SK-N-SH (cell line): ENCODE measurements at regions of chr3 and their contacts with region 1.

Region 1: DNA sequence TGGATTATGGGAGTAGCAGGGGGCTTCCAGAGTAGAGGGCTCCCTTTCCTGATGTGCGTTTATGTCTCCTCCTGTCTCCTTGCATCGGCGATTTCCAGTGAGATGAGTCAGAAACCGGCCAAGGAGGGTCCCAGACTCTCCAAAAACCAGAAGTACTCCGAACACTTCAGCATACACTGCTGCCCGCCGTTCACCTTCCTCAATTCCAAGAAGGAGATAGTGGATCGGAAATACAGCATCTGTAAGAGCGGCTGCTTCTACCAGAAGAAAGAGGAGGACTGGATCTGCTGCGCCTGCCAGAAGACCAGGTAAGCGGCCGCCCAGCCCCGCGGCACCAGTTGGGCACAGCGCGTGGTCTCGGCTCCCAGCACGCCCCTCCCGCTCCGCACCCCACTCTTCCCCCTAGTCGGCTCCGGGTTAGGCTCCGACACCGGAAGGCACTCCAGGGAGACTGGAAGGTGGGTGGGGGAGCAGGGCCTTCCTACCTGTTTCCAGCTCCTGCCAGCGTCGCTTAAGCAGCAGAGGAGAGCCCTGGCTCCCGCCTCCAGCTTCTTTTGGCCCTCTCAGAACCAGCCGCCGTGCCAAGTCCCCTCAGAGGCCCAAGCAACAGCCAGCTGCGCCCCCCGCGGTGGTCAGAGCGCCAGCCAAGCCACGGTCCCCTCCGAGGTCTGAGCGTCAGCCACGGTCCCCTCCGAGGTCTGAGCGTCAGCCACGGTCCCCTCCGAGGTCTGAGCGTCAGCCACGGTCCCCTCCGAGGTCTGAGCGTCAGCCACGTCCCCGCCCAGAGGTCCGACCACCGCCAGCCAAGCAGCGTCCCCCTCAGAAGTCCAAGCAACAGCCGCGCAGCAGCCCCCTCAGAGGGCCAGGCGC is 34.7 kb downstream of the MOBP start:
- DNase-seq: peak; percentile 76
- H3K4me3 ChIP-seq: peak overlapping the region in 1 of 2 experiments; percentile 48; a peak in 2 of 4 replicates
- H3K27ac ChIP-seq: no peak overlapping the region
- H3K4me1 ChIP-seq: peaks cover 0 to 9% of the 10 kb centered on the region in 2 experiments; a peak in 1 of 4 replicates
- H3K27me3 ChIP-seq: peaks cover 33% of the 10 kb centered on the region
- CTCF ChIP-seq: no peak
- EP300 ChIP-seq: no peak
- RAD21 ChIP-seq: no peak

Region 2: GRCh38 chr3:39414421-39414907 is 87.7 kb before region 1 on chr3:
- CTCF ChIA-PET with region 1: interaction called, 35 read pairs
- POLR2A ChIA-PET with region 1: no interaction called
- DNase-seq: no peak
- H3K4me3 ChIP-seq: no peak overlapping the region
- H3K27ac ChIP-seq: peak overlapping the region; percentile 31 to 55; a peak in 3 of 4 replicates
- H3K4me1 ChIP-seq: peaks cover 0 to 9% of the 10 kb centered on the region in 2 experiments; a peak in 1 of 4 replicates
- H3K27me3 ChIP-seq: no peaks in the 10 kb centered on the region
- CTCF ChIP-seq: no peak
- EP300 ChIP-seq: no peak
- RAD21 ChIP-seq: no peak

Region 3: GRCh38 chr3:39419730-39420315 is 82.4 kb before region 1 on chr3:
- CTCF ChIA-PET with region 1: interaction called, 35 read pairs
- POLR2A ChIA-PET with region 1: no interaction called
- DNase-seq: no peak
- H3K4me3 ChIP-seq: no peak overlapping the region
- H3K27ac ChIP-seq: no peak overlapping the region
- H3K4me1 ChIP-seq: peaks cover 0 to 2% of the 10 kb centered on the region in 2 experiments; a peak in 1 of 4 replicates
- H3K27me3 ChIP-seq: no peaks in the 10 kb centered on the region
- CTCF ChIP-seq: no peak
- EP300 ChIP-seq: no peak
- RAD21 ChIP-seq: no peak

Region 4: GRCh38 chr3:39473452-39474127 is 28.6 kb before region 1 on chr3:
- CTCF ChIA-PET with region 1: interaction called, 21 read pairs
- POLR2A ChIA-PET with region 1: no interaction called
- DNase-seq: no peak
- H3K4me3 ChIP-seq: no peak overlapping the region
- H3K27ac ChIP-seq: no peak overlapping the region
- H3K4me1 ChIP-seq: no peaks in the 10 kb centered on the region; a peak in 1 of 4 replicates
- H3K27me3 ChIP-seq: no peaks in the 10 kb centered on the region
- CTCF ChIP-seq: no peak
- EP300 ChIP-seq: no peak
- RAD21 ChIP-seq: no peak

Region 5: DNA sequence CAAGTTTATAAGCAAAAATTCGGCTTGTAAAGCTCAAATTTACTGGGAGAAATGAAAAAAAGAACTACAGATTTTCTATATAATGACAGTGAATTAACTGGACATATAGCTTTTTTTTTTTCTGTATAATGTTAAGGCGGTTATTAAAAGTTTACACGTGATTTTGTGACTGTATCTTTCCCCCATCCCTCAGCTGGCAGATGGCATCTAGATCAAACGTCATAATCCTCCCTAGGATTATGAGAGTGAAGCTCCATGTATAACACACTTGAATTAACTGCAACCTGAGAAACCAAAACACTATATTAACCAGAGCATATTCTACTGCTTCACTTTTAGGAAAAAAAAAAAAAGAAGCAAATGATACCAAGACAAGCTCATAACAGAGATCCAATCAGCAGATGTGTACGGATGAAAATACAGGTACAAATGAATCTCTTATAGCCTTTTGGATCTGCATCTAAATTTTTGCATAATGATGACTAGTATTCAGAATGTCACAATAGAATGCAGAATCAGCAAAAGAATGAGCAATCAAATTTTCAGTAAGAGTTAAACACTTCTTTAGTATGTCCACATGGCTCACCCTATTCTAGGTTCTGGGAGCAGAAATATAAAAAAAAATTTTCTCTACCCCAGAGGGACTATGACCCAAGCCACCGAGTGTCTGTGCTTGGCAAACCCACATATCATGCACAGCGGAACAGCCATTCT is 22.3 kb before region 1 on chr3:
- CTCF ChIA-PET with region 1: interaction called, 21 read pairs
- POLR2A ChIA-PET with region 1: no interaction called
- DNase-seq: no peak
- H3K4me3 ChIP-seq: no peak overlapping the region
- H3K27ac ChIP-seq: no peak overlapping the region
- H3K4me1 ChIP-seq: no peaks in the 10 kb centered on the region
- H3K27me3 ChIP-seq: no peaks in the 10 kb centered on the region
- CTCF ChIP-seq: no peak
- EP300 ChIP-seq: no peak
- RAD21 ChIP-seq: no peak

Region 6: GRCh38 chr3:39485547-39485946 is 16.7 kb before region 1 on chr3:
- CTCF ChIA-PET with region 1: interaction called, 25 read pairs
- POLR2A ChIA-PET with region 1: no interaction called
- DNase-seq: no peak
- H3K4me3 ChIP-seq: no peak overlapping the region
- H3K27ac ChIP-seq: no peak overlapping the region
- H3K4me1 ChIP-seq: no peaks in the 10 kb centered on the region
- H3K27me3 ChIP-seq: no peaks in the 10 kb centered on the region
- CTCF ChIP-seq: no peak
- EP300 ChIP-seq: no peak
- RAD21 ChIP-seq: no peak

Region 7: DNA sequence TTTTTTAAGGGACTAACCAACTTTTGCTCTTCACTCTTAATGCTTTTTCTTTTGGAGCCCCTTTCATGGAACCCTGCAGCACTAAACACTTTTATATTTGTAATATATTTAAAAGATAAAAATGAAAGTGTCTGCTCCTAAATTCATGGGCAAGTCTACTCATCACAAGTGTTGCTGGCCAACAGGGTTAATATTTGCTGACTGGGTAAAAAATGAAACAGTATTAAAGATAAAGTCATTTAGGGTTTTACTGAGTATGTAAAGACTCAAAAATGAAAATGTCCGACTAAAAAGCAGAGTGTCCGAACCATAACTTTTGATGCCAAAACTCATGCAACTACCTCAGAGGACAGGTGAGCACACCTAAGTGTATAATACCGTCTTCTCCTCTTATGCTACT is 19.3 kb after region 1 on chr3:
- CTCF ChIA-PET with region 1: no interaction called
- POLR2A ChIA-PET with region 1: no interaction called
- DNase-seq: no peak
- H3K4me3 ChIP-seq: no peak overlapping the region
- H3K27ac ChIP-seq: no peak overlapping the region
- H3K4me1 ChIP-seq: no peaks in the 10 kb centered on the region
- H3K27me3 ChIP-seq: no peaks in the 10 kb centered on the region
- CTCF ChIP-seq: no peak
- EP300 ChIP-seq: no peak
- RAD21 ChIP-seq: no peak

Region 8: DNA sequence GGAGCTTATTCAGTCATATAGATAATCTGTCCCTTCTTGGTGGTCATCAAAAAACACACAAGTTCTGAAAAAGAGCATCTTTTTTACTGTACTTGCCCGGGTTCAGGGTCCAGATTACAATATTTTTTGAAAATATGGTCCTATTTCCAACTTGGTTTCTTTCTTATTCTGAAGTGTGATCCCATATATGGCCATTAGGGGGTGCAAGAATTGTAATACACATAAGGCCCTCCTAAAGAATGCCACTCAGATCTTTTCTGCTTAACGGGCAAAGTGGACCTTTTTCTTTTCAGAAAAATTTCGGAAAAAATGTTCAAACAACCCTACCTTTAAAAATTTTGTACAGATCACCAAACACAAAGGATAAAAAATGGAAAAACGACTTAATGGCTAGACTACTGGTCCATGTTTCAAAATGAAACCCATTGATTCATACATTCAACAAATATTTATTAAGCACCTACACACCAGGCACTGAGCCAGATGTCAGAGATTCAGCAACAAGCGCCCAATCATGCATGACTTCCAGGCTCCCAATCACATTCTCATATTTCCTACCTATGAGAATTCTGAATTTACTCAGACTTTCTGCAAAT is 205.2 kb after region 1 on chr3:
- CTCF ChIA-PET with region 1: no interaction called
- POLR2A ChIA-PET with region 1: no interaction called
- DNase-seq: peak; percentile 59
- H3K4me3 ChIP-seq: no peak overlapping the region; a peak in 1 of 4 replicates
- H3K27ac ChIP-seq: no peak overlapping the region
- H3K4me1 ChIP-seq: no peaks in the 10 kb centered on the region
- H3K27me3 ChIP-seq: no peaks in the 10 kb centered on the region
- CTCF ChIP-seq: peak; percentile 78
- EP300 ChIP-seq: no peak
- RAD21 ChIP-seq: peak; percentile 72